Mammary epithelial cell (primary cell): ENCODE measurements at regions of chr17 and their contacts with region 1.

Region 1: DNA sequence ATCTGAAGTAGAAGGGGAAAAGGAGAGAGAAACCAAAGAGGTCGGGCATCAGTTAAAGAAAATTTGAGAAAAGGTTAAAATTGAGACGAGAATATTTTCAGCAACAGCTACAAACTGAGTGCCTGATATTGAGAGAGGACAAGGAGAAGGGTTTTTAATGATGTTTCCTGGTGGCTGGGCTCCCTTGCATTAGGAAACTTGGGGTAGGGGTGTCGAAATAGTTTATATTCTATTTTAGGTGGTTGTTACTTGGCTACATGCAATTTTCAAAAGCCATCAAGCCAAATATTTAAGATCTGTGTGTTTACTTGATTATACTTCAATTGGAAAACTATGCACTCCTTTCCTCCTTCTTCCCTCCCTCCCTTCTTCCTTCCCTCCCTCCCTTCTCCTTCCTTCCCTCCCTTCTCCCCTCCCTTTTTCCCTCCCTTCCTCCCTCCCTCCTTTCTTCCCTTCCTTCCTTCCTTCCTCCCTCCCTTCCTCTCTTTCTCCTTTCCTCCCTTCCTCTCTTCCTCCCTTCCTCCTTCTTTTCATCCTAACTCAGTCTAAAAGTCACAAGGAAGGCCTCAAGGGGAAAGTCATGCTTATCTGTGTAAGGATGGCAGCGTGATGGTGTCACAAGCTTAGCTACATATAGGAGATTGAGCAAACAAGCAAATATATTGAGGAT is 1.8 kb upstream of the APOH start:
- DNase-seq: no peak
- H3K4me3 ChIP-seq: no peak overlapping the region
- H3K27ac ChIP-seq: no peak overlapping the region
- H3K4me1 ChIP-seq: no peaks in the 10 kb centered on the region
- H3K27me3 ChIP-seq: no peaks in the 10 kb centered on the region
- CTCF ChIP-seq: no peak

Region 2: GRCh38 chr17:66337866-66338485 is 106.9 kb after region 1 on chr17:
- CTCF ChIA-PET with region 1: no interaction called
- dilution Hi-C with region 1: loop called (anchors 5 kb)
- in situ Hi-C with region 1: no loop called
- intact Hi-C with region 1: no loop called
- DNase-seq: no peak
- H3K4me3 ChIP-seq: no peak overlapping the region
- H3K27ac ChIP-seq: no peak overlapping the region
- H3K4me1 ChIP-seq: no peaks in the 10 kb centered on the region
- H3K27me3 ChIP-seq: no peaks in the 10 kb centered on the region
- CTCF ChIP-seq: no peak

Region 3: GRCh38 chr17:66819466-66819865 is 588.4 kb after region 1 on chr17:
- CTCF ChIA-PET with region 1: no interaction called
- dilution Hi-C with region 1: no loop called
- in situ Hi-C with region 1: no loop called
- intact Hi-C with region 1: no loop called
- DNase-seq: no peak
- H3K4me3 ChIP-seq: no peak overlapping the region
- H3K27ac ChIP-seq: no peak overlapping the region
- H3K4me1 ChIP-seq: no peaks in the 10 kb centered on the region
- H3K27me3 ChIP-seq: no peaks in the 10 kb centered on the region
- CTCF ChIP-seq: no peak